Spleen (tissue), 13 donors: ENCODE measurements at regions of chr17 and their contacts with region 1.

Region 1: GRCh38 chr17:16589097-16589969 is 20.3 kb upstream of the ZNF287 start:
- DNase-seq: peak; percentile 99
- H3K4me3 ChIP-seq: peak overlapping the region; percentile 37 to 79 (median 54)
- H3K27ac ChIP-seq: peak overlapping the region in 6 of 8 donors; percentile 9 to 74 (median 61)
- H3K4me1 ChIP-seq: peaks cover 0 to 23% (median 16%) of the 10 kb centered on the region in 6 donors
- H3K27me3 ChIP-seq: peaks cover 0 to 33% (median 0%) of the 10 kb centered on the region in 7 donors
- CTCF ChIP-seq: peak; percentile 87 to 99 (median 99)
- POLR2A ChIP-seq: no peak

Region 2: DNA sequence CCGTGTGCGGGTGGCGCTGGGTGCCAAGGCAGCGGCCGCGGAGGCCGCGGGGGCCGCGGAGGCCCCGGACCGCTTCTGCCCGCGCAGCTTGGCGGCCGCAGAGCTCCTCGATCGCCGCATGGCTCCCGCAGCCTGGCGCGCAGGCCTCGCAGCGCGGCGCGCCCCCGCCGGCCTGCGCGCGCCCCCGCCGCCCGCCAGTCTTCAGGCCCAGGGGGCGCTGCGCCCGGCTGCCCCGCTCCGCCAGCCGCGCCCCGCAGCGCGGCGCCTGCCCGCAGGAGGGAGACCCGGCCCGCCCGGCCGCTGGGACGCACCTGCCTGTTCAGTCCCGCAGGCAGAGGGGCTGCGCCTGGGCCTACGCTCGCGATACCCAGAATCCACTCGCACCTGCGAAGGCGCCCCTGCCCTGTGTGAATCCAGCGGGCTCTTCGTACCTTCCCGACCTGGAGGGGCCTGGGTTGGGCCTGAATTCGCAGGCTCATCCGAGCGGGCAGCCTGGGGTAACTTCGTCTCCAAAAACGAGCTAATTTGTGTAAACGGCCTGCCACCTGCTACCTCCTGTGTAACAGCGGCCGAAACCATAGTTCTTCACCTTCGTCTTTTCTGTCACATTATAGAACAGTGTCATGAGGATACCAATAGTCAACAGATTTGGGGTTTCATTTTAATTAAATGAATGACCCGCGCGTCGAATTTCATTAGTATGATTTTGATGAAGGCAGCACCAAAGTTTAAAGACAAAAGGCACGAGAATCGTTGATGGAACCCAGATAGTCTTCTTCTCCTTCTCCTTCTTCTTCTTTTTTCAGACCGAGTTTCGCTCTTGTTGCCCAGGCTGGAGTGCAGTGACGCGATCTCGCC is 235.8 kb before region 1 on chr17 and contains the start of gene CENPV:
- intact Hi-C with region 1: loop called (anchors 10 kb)
- DNase-seq: peak; percentile 89
- H3K4me3 ChIP-seq: peak within 1 kb of the TSS; percentile 62 to 76 (median 70)
- H3K27ac ChIP-seq: peak within 1 kb of the TSS in 5 of 8 donors; percentile 20 to 70 (median 53)
- H3K4me1 ChIP-seq: peaks cover 0 to 26% (median 17%) of the 10 kb centered on the region in 6 donors
- H3K27me3 ChIP-seq: peaks cover 0 to 15% (median 0%) of the 10 kb centered on the region in 7 donors
- CTCF ChIP-seq: peak in 2 of 11 experiments; percentile 27 to 30
- POLR2A ChIP-seq: no peak
- total RNA-seq, gene CENPV: 5.1 to 15.2 (median 9.5) TPM

Region 3: DNA sequence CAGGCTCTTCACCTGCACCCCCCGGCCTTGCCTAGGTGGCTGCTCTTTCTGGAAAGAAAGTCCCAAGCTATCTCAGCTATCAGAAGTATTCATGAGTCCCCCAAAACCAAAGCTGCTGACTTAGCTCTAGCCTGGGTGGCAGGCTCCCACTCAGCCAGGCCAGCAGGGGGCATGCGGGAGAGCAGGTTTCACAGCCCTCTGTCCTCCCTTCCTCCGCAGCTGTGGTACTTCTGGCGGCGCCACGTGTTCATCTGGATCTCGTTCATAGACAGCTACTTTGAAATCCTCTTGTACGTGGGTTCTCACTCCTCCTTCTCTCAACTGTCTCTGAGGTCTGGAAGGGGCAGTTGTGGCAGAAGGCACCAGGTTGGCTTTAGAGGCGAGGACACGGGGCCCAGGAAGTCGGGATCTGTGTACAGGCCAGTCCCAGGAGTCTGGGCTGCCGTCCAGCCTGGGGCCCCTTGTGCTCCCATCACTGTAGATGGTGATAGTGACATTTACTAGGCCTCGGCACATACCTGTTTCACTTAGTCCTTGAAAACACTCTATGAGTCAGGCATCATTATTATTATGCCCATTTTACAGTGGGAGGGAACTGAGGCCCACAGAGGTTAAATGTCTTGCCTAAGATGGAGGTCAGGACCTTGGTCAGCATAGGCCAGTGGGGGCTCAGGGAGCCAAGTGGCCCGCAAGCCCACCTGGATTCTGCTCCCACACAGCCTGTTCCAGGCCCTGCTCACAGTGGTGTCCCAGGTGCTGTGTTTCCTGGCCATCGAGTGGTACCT is 161.0 kb before region 1 on chr17:
- intact Hi-C with region 1: no loop called
- DNase-seq: no peak
- H3K4me3 ChIP-seq: no peak overlapping the region
- H3K27ac ChIP-seq: no peak overlapping the region
- H3K4me1 ChIP-seq: peaks cover 0 to 3% (median 0%) of the 10 kb centered on the region in 6 donors
- H3K27me3 ChIP-seq: no peaks in the 10 kb centered on the region
- CTCF ChIP-seq: peak in 9 of 11 experiments; percentile 20 to 68 (median 53)
- POLR2A ChIP-seq: no peak

Region 4: GRCh38 chr17:16537130-16537458 is 52.2 kb before region 1 on chr17:
- intact Hi-C with region 1: loop called (anchors 5 kb)
- DNase-seq: no peak
- H3K4me3 ChIP-seq: peak overlapping the region in 3 of 8 donors; percentile 66 to 79 (median 69)
- H3K27ac ChIP-seq: peak overlapping the region; percentile 93 to 98 (median 97)
- H3K4me1 ChIP-seq: peaks cover 0 to 21% (median 15%) of the 10 kb centered on the region in 6 donors
- H3K27me3 ChIP-seq: peaks cover 0 to 5% (median 0%) of the 10 kb centered on the region in 7 donors
- CTCF ChIP-seq: peak in 2 of 11 experiments; percentile 2 to 17
- POLR2A ChIP-seq: no peak

Region 5: DNA sequence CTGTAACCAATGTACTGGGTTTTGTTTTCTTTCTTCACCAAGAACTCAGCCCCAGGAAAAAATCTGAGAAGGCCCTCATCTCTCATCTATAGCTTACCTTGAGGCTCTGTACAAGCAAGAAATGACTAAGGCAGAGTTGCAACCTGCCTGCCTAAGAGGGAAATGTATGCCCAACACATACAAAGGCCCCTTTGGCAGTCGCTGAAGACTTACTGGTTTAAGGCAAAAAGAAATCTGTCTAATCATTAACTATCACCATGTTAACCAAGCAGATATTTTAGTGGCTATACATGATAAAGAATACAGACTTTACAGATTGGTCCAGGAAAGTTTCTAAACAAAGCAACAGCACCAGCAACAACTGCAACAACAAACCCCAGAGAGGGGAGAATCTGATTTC is 50.1 kb after region 1 on chr17:
- intact Hi-C with region 1: no loop called
- DNase-seq: no peak
- H3K4me3 ChIP-seq: no peak overlapping the region
- H3K27ac ChIP-seq: no peak overlapping the region
- H3K4me1 ChIP-seq: no peaks in the 10 kb centered on the region
- H3K27me3 ChIP-seq: no peaks in the 10 kb centered on the region
- CTCF ChIP-seq: no peak
- POLR2A ChIP-seq: no peak

Region 6: GRCh38 chr17:16652847-16653208 is 63.5 kb after region 1 on chr17:
- intact Hi-C with region 1: no loop called
- DNase-seq: no peak
- H3K4me3 ChIP-seq: peak overlapping the region; percentile 60 to 90 (median 76)
- H3K27ac ChIP-seq: peak overlapping the region; percentile 86 to 91 (median 88)
- H3K4me1 ChIP-seq: peaks cover 10 to 29% (median 20%) of the 10 kb centered on the region in 6 donors
- H3K27me3 ChIP-seq: no peaks in the 10 kb centered on the region
- CTCF ChIP-seq: no peak
- POLR2A ChIP-seq: no peak